Endothelial cell of umbilical vein (primary cell): ENCODE measurements at regions of chr14 and their contacts with region 1.

Region 1: GRCh38 chr14:37230551-37231194 is 32.9 kb downstream of the MIPOL1 start:
- DNase-seq: peak; percentile 66
- H3K4me3 ChIP-seq: no peak overlapping the region
- H3K27ac ChIP-seq: no peak overlapping the region
- H3K4me1 ChIP-seq: no peaks in the 10 kb centered on the region
- H3K27me3 ChIP-seq: no peaks in the 10 kb centered on the region
- CTCF ChIP-seq: peak; percentile 40 to 54
- POLR2A ChIP-seq: no peak

Region 2: DNA sequence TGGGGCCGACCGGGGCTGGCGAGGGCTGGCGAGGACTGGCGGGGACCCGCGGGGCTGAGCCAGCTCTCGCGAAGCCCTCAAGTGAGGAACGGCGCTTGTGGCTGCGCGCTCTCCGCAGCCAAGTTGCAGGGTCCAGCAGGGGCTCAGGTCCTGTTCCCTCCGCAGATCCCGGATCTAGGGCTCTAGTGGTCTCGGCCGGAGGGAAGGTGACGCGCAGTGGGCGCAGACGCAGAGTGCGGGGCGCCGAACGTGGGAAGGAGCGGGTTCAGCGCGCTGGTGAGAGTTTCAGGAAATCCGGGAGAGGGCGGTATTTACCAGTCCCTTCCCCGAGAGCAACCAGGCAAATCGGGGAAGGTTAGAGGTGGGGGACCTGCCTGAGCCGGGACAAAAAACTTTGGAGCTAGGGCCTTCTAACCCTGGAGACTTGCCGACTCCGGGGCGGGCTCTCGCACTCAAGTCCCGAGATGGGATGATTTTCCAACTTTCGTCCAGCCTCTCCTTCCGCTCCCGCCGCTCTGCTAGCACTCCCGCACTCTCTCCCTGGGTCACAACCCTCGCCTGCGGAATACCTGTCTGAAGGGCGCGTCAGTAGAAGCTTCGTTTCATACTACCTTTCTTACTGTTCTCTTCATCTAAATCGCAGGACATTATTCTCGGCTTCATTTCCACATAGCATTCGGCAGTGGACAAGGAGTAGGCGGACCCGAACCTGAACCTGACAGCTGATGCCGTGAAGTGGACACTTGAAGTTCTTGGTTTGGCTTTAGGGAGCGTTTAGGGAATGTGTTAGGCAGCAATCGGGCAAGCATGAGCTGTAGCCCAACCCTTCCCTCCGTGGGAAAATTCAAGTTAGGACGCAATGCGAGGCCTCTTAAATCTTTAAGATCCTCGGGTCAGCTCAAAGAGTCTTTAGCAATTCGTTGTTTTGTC is 582.6 kb before region 1 on chr14:
- CTCF ChIA-PET with region 1: interaction called, 5 read pairs
- POLR2A ChIA-PET with region 1: no interaction called
- dilution Hi-C with region 1: no loop called
- intact Hi-C with region 1: loop called (anchors 5 kb)
- DNase-seq: peak; percentile 40
- H3K4me3 ChIP-seq: peak overlapping the region in 2 of 3 experiments; percentile 31 to 35
- H3K27ac ChIP-seq: no peak overlapping the region
- H3K4me1 ChIP-seq: peaks cover 10% of the 10 kb centered on the region
- H3K27me3 ChIP-seq: peaks cover 59 to 91% of the 10 kb centered on the region in 2 experiments
- CTCF ChIP-seq: peak; percentile 42 to 47
- POLR2A ChIP-seq: no peak

Region 3: DNA sequence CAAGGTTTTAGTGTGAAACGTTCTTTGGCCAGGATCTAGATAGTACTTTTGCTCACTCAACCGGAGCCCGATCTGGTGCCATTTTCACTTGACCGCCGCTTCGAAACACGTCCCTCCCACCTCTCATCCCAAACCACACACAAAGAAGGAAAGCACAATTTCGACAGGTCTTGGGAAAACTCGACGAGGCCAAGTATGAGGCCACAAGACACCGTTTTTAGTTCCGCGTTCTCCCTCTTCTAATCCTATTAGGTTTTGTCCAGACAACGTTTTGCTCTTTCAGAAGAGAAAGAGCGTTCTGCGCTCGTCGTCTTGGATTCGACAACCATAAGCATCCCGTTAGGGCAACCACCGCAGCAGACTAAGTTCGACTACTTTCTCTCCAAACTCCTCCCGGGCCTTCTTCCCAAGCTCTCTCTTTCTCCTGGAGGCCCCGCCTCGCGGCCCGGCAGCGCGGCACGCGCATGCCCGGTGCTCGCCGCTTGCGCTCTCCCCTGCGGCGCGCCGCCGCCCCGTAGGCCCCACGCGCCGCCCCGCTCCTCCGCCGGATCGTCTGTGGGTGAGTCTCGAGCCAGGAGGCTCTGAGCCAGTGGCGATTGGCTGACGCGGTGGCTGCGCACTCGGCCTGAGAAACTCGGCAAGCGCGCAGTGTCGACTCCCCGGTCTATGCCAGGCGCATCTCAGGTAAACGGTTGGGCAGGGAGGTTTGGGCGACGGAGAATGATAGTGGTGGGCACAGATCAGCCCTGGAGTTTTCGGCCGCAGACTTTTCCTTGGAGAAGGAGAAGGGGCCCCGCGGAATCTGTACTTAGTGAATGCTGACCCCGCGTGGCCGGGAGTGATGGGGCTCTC is 33.0 kb before region 1 on chr14 and contains the start of gene MIPOL1:
- CTCF ChIA-PET with region 1: interaction called, 28 read pairs
- POLR2A ChIA-PET with region 1: no interaction called
- dilution Hi-C with region 1: no loop called
- intact Hi-C with region 1: loop called (anchors 1 kb)
- DNase-seq: peak; percentile 93
- H3K4me3 ChIP-seq: peak within 1 kb of the TSS; percentile 61 to 86 (median 86)
- H3K27ac ChIP-seq: peak within 1 kb of the TSS; percentile 97
- H3K4me1 ChIP-seq: peaks cover 52% of the 10 kb centered on the region
- H3K27me3 ChIP-seq: no peaks in the 10 kb centered on the region
- CTCF ChIP-seq: peak in 1 of 2 donors; percentile 49
- POLR2A ChIP-seq: peak; percentile 92
- total RNA-seq, gene MIPOL1: 31.3 and 33.5 TPM in 2 replicates

Region 4: DNA sequence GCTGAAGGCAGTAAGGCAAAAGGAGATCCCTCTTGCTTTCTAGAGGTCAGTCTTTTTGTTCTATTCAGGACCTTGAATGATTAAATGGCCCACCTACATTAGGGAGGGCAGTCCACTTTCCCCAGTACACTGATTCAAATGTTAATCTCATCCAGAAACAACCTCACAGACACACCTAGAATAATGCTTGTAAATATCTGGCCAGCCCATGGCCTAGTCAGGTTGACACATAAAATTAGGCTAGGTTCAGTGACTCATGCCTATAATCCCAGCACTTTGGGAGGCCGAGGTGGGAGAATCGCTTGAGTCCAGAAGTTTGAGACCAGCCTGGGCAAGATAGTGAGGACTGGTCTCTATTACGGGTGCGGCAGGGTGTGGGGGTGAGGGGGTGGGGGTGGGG is 10.5 kb after region 1 on chr14:
- CTCF ChIA-PET with region 1: interaction called, 24 read pairs
- POLR2A ChIA-PET with region 1: no interaction called
- dilution Hi-C with region 1: no loop called
- intact Hi-C with region 1: no loop called
- DNase-seq: no peak
- H3K4me3 ChIP-seq: no peak overlapping the region
- H3K27ac ChIP-seq: no peak overlapping the region
- H3K4me1 ChIP-seq: no peaks in the 10 kb centered on the region
- H3K27me3 ChIP-seq: no peaks in the 10 kb centered on the region
- CTCF ChIP-seq: no peak
- POLR2A ChIP-seq: no peak

Region 5: DNA sequence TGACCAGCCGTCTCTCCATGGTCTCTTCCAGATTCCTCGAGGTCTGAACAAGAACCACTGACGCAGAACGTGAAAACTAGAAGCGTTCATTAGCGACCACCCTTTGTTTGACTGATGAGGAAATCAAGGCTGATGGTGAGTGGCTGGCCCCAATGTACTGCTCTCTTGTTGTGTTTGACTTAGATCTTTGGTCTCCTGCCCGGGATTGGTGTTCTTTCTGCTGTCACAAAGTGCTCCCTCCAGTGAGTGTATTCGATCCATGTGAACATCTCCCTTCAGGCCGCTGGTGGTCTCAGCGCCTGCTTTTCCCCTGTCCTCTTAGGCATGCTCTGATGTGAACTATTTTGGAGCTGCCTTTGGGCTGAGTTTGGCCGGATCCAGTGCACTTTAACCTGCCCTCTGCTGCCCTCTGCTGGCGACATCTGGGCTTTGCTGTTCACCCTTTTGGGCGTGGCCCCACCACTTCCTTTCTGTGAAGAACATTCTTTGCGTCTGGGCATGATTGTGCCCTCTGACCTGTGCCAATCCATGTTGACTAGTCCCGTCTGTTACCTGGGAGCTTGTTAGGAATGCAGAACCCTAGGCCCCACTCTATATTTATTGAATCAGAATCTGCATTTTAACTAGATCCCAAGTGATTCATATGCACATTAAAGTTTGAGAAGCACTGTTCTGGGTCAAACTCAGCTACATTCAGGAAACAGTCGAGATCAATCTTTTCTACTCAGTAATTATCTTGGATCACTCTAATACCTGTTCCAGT is 643.9 kb after region 1 on chr14:
- CTCF ChIA-PET with region 1: interaction called, 25 read pairs
- POLR2A ChIA-PET with region 1: no interaction called
- dilution Hi-C with region 1: no loop called
- intact Hi-C with region 1: loop called (anchors 1 kb)
- DNase-seq: peak; percentile 69
- H3K4me3 ChIP-seq: no peak overlapping the region
- H3K27ac ChIP-seq: no peak overlapping the region
- H3K4me1 ChIP-seq: no peaks in the 10 kb centered on the region
- H3K27me3 ChIP-seq: peaks cover 5 to 14% of the 10 kb centered on the region in 2 experiments
- CTCF ChIP-seq: peak; percentile 87 to 93
- POLR2A ChIP-seq: no peak